ENCODE measurements at regions of chr5 and their contacts with region 1.

Region 1: GRCh38 chr5:143177263-143177983 is 226.1 kb downstream of the NR3C1 start:
- DNase-seq: peak in 1 of 2 donors; percentile 77
- ATAC-seq: peak; percentile 85 to 88 (median 87)
- H3K4me3 ChIP-seq: no peak overlapping the region
- H3K27ac ChIP-seq: peak overlapping the region; percentile 85
- H3K4me1 ChIP-seq: peaks cover 33% of the 10 kb centered on the region
- H3K27me3 ChIP-seq: no peaks in the 10 kb centered on the region
- CTCF ChIP-seq: no peak

Region 2: GRCh38 chr5:143142596-143143435 is 34.6 kb before region 1 on chr5:
- intact Hi-C with region 1: loop called (anchors 5 kb)
- DNase-seq: peak; percentile 30 to 70
- ATAC-seq: peak; percentile 35 to 76 (median 59)
- H3K4me3 ChIP-seq: peak overlapping the region; percentile 16
- H3K27ac ChIP-seq: peak overlapping the region; percentile 94
- H3K4me1 ChIP-seq: peaks cover 71% of the 10 kb centered on the region
- H3K27me3 ChIP-seq: no peaks in the 10 kb centered on the region
- CTCF ChIP-seq: no peak

Region 3: DNA sequence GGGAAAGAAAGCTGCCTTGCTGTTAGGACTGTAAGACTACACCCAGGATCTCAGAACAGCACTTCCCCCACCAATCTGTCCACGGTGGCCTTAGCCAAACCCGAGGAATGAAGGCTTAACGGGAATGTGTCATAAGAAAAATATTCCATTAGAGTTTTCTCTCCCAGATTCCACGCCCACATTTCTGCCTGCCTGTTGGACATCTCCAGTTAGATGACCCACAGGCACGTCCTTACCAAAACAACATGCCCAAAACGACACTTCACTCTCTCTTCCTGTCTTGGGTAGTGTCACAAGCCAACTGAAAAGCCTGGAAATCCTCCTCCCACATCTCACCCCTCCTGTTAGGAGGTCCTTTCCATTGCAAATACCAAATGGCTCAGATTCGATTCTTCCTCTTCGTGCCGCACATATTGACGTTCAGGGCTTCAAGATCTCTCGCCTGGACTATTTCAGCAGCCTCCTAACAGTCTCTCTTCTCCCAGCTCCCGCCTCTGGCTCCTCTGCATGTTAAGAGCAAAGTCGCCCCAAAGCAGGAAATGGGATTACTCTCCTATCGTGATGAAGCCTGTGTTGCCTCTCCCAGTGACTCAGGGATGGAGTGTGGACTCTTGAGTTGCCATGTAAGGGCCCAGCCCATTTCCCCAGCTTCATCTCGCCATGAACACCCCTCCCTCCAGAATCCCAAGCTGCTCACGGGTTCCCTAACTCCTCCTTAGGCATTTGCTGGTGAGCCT is 66.7 kb after region 1 on chr5:
- intact Hi-C with region 1: loop called in 1 of 2 experiments (anchors 2 kb)
- DNase-seq: peak; percentile 75 to 85
- ATAC-seq: peak; percentile 83 to 85 (median 84)
- H3K4me3 ChIP-seq: peak overlapping the region; percentile 37
- H3K27ac ChIP-seq: peak overlapping the region; percentile 87
- H3K4me1 ChIP-seq: peaks cover 52% of the 10 kb centered on the region
- H3K27me3 ChIP-seq: no peaks in the 10 kb centered on the region
- CTCF ChIP-seq: no peak

Measured in psoas muscle (tissue), 8 donors.